Activated T-helper 2 cell treated with anti-CD3 and anti-CD28 coated beads, Interferon-gamma antibody, Interleukin-2, Interleukin-4, amounts not matched to agents 10 μg/mL and 5 μg/mL and 100 μg/mL, durations not matched to agents 14 hours and 24 hours and 36 hours (primary cell): ENCODE measurements at regions of chr4 and their contacts with region 1.

Region 1: DNA sequence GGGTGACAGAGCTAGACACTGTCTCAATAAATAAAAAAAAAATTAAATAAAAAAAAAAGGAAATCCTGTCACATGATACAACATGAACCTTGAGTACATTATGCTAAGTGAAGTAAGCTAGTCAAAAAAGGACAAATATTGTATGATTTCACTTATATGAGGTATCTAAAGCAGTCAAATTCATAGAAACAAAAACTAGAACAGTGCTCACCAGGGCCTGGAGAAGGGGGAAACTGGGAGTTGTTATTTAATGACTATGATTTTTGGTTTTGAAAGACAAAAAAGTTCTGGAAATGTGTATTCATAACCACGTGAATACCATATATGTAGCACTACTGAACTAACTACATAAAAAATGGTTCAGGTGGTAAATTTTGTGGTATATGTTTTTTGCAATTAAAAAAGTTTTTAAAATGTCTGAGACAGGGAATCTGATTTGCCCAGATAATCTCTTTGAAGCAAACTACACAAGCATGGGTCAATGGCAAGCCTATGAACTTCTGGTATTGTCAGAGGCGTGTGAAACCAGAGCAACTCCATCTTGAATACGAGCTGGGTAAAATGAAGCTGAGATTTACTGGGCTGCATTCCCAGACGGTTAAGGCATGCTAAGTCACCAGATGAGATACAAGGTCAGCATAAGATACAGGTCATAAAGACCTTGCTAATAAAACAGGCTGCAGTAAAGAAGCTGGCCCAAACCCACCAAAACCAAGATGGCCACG is 42.3 kb downstream of the ANAPC10 start:
- DNase-seq: no peak
- H3K4me3 Mint-ChIP-seq: no peak overlapping the region
- H3K27ac Mint-ChIP-seq: no peak overlapping the region
- H3K4me1 Mint-ChIP-seq: peaks cover 27% of the 10 kb centered on the region
- H3K27me3 Mint-ChIP-seq: no peaks in the 10 kb centered on the region

Region 2: DNA sequence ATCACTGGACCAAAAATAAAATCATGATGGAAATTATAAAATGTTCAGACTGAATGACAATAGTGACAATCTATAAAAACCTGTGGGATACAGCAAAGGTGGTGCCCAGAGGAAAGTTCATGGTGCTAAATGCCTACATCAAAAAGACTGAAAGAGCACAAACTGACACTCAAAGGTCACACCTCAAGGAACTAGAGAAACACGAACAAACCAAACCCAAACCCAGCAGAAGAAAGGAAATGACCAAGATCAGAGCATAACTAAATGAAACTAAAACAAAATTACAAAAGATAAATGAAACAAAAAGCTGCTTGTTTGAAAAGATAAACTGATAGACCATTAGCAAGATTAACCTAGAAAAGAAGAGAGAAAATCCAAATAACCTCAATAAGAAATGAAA is 36.3 kb before region 1 on chr4:
- intact Hi-C with region 1: loop called (anchors 1 kb)
- DNase-seq: no peak
- H3K4me3 Mint-ChIP-seq: peak overlapping the region; percentile 56
- H3K27ac Mint-ChIP-seq: peak overlapping the region; percentile 85
- H3K4me1 Mint-ChIP-seq: peaks cover 27% of the 10 kb centered on the region
- H3K27me3 Mint-ChIP-seq: no peaks in the 10 kb centered on the region

Region 3: DNA sequence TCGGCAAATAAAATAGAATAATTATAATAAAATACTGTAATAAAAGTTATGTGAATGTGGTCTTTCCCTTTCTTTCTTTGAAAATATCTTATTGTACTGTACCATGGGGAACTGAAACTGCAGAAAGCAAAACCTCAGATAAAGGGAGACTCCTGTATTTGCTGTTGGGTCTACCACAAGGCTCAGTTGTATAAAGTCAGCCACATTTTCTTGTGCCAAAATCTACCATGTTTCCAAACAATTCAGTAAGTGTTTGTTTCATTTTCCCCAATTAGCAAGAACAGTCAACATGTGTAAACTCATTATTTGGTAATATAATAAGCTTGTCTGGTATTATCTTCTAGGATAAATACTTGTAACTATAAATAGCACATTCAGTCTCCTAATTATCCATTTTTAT is 139.5 kb after region 1 on chr4:
- intact Hi-C with region 1: no loop called
- DNase-seq: no peak
- H3K4me3 Mint-ChIP-seq: no peak overlapping the region
- H3K27ac Mint-ChIP-seq: no peak overlapping the region
- H3K4me1 Mint-ChIP-seq: no peaks in the 10 kb centered on the region
- H3K27me3 Mint-ChIP-seq: peaks cover 25% of the 10 kb centered on the region